ENCODE measurements at regions of chr18 and their contacts with region 1.

Region 1: GRCh38 chr18:36942264-36942663 is 113.3 kb downstream of the KIAA1328 start:
- DNase-seq: peak; percentile 41
- H3K4me3 ChIP-seq: no peak overlapping the region
- H3K27ac ChIP-seq: no peak overlapping the region
- H3K4me1 ChIP-seq: no peaks in the 10 kb centered on the region
- H3K27me3 ChIP-seq: no peaks in the 10 kb centered on the region
- CTCF ChIP-seq: peak; percentile 48 to 54
- POLR2A ChIP-seq: no peak

Region 2: GRCh38 chr18:37322492-37323035 is 380.3 kb after region 1 on chr18:
- CTCF ChIA-PET with region 1: interaction called, 10 read pairs
- POLR2A ChIA-PET with region 1: no interaction called
- dilution Hi-C with region 1: no loop called
- intact Hi-C with region 1: loop called (anchors 2 kb)
- DNase-seq: peak; percentile 17
- H3K4me3 ChIP-seq: no peak overlapping the region
- H3K27ac ChIP-seq: no peak overlapping the region
- H3K4me1 ChIP-seq: no peaks in the 10 kb centered on the region
- H3K27me3 ChIP-seq: no peaks in the 10 kb centered on the region
- CTCF ChIP-seq: peak; percentile 77 to 88
- POLR2A ChIP-seq: no peak

Region 3: DNA sequence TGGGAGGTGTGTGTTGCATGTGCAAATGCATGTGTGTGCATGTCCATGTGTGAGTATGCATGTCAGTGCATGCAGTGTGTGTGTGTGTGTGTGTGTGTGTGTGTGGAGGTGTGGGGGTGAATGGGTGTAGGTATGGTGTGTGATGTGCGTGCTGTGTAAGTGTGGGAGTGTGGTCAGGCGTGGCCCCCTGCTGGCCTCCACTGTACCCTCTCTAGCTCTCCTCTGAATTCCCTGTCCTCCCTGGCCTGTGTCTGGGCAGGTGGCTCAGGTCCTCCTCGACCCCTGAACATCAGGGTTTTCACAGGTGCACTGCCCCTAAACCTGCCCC is 393.1 kb after region 1 on chr18:
- CTCF ChIA-PET with region 1: interaction called, 13 read pairs
- POLR2A ChIA-PET with region 1: no interaction called
- dilution Hi-C with region 1: no loop called
- intact Hi-C with region 1: no loop called
- DNase-seq: no peak
- H3K4me3 ChIP-seq: no peak overlapping the region
- H3K27ac ChIP-seq: no peak overlapping the region
- H3K4me1 ChIP-seq: no peaks in the 10 kb centered on the region
- H3K27me3 ChIP-seq: no peaks in the 10 kb centered on the region
- CTCF ChIP-seq: peak in 1 of 2 donors; percentile 34
- POLR2A ChIP-seq: no peak

Region 4: DNA sequence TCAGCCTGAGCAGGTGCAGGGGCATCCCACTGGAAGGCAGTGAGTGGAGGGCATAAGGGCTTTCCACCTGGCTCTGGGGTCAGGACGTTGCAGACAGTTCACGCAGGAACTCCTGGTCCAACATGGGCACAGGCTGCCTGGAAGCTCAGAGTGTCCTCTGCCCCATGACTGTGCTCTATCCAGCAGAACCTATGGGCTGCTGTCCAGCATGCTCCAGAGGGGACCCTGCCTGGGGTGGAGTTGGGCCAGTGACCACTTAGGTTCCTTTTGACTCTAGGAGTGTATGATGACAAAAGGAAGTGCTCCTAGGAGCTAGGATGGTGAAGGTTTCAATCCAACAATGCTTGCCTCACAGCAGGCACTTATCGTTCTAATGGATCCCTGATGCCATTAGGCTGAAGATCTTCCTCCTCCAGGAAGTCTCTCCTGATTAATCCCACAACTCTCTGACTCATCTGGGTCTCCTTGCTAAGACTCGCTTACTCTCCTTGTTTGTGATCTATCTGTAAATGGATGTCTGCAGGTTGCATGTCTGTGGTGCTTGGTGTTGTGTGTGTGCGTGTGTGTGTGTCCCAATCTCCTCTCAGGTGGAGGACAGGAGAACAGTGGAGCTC is 399.3 kb after region 1 on chr18:
- CTCF ChIA-PET with region 1: interaction called, 17 read pairs
- POLR2A ChIA-PET with region 1: no interaction called
- dilution Hi-C with region 1: no loop called
- intact Hi-C with region 1: no loop called
- DNase-seq: no peak
- H3K4me3 ChIP-seq: no peak overlapping the region
- H3K27ac ChIP-seq: no peak overlapping the region
- H3K4me1 ChIP-seq: no peaks in the 10 kb centered on the region
- H3K27me3 ChIP-seq: peaks cover 0 to 2% of the 10 kb centered on the region in 2 experiments
- CTCF ChIP-seq: no peak
- POLR2A ChIP-seq: no peak

Region 5: GRCh38 chr18:37476182-37476581 is 533.9 kb after region 1 on chr18:
- CTCF ChIA-PET with region 1: interaction called, 6 read pairs
- POLR2A ChIA-PET with region 1: no interaction called
- dilution Hi-C with region 1: no loop called
- intact Hi-C with region 1: loop called (anchors 1 kb)
- DNase-seq: peak; percentile 10
- H3K4me3 ChIP-seq: no peak overlapping the region
- H3K27ac ChIP-seq: no peak overlapping the region
- H3K4me1 ChIP-seq: no peaks in the 10 kb centered on the region
- H3K27me3 ChIP-seq: no peaks in the 10 kb centered on the region
- CTCF ChIP-seq: peak; percentile 56 to 61
- POLR2A ChIP-seq: no peak

Region 6: DNA sequence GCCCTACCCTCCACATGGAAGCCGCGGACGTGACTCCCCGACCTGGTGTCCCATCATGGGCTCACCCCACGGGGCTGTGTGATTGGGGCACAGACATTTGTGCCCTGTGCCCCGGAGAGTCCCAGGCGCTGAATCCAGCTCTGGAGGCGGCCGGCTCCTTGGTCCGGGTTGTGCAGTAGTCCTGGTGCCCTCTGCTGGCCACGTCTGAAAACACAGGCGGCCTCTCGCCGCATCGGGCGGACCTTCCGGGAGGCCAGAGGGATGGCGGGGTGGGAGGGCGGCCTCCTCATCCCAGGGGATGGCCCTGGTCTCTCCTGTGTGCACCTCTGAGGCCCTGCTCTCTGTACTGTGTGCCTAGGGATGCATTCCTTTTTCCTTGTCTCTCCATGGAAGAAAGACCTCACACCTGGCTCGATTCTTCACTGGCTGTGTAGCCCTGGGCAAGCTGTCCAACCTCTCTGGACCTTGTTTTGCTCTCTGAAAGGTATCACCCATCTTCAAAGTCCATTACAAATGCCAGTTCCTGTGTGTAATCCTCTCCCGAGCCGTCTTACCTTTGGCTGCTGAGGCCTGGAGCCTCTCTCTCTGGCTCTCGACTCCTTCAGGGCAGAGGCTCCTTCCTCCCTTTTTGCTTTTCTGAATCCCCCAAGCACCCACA is 595.7 kb after region 1 on chr18:
- CTCF ChIA-PET with region 1: interaction called, 43 read pairs
- POLR2A ChIA-PET with region 1: no interaction called
- dilution Hi-C with region 1: no loop called
- intact Hi-C with region 1: loop called (anchors 1 kb)
- DNase-seq: peak; percentile 44
- H3K4me3 ChIP-seq: no peak overlapping the region
- H3K27ac ChIP-seq: no peak overlapping the region
- H3K4me1 ChIP-seq: no peaks in the 10 kb centered on the region
- H3K27me3 ChIP-seq: peaks cover 7 to 8% of the 10 kb centered on the region in 2 experiments
- CTCF ChIP-seq: peak; percentile 68 to 93
- POLR2A ChIP-seq: no peak

Measured in endothelial cell of umbilical vein (primary cell).